Naive thymus-derived CD4-positive, alpha-beta T cell (primary cell): ENCODE measurements at regions of chr16 and their contacts with region 1.

Region 1: GRCh38 chr16:84754353-84754856 is 54.6 kb downstream of the USP10 start:
- DNase-seq: peak in 8 of 9 donors; percentile 50 to 87 (median 83)
- ATAC-seq: peak; percentile 78
- H3K4me3 ChIP-seq: peak overlapping the region; percentile 4
- H3K4me3 Mint-ChIP-seq: peak overlapping the region; percentile 49 to 79 (median 69)
- H3K27ac ChIP-seq: peak overlapping the region; percentile 44
- H3K27ac Mint-ChIP-seq: peak overlapping the region; percentile 69 to 92 (median 84)
- H3K4me1 ChIP-seq: peaks cover 19 to 38% of the 10 kb centered on the region in 2 donors
- H3K4me1 Mint-ChIP-seq: peaks cover 46 to 83% (median 79%) of the 10 kb centered on the region in 7 donors
- H3K27me3 ChIP-seq: no peaks in the 10 kb centered on the region
- H3K27me3 Mint-ChIP-seq: no peaks in the 10 kb centered on the region

Region 2: DNA sequence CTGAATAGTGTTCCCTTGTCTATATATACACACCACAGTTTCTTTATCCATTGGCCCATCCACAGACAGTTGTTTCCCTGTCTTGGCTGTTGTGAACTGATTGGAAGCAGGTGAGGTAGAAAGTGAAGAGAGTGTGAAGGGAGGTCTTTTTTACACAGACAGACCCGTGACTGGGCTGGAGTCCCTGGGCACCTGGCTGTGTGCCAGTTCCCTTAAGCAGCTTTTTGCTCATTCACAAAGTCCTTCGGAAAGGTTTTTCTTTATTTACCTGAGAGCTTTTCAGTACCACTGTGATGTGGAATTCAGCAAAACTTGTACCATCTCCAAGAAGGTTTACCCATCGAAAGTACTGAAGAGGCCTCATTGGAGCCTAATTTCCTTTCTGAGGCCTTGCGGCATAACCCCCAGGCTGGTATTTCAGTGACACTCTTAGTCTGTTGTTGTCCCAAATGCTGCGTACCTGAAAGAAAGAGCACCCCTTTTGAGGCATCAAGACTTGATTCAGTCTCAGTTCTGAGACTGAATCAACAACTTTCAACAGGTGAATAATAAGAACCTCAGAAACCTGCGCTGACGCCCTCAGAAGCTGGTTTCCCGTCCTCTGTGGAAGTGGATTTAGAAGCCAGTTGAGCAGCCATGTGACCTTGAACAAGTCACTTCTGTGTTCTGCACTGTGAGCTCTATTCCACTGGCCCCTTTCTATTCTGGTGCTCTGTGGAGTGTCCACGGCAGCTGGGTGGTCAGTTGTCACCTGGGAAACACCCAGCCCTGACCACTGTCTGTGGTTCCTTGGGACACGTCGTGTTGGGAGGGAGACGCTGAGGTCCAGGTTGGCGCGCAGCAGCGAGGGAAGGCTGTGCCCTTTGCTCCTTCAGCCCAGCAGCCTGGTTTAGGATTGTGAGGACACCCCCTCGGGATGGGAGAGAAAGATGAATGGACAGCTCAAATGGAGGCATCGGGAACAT is 11.5 kb after region 1 on chr16:
- CTCF ChIA-PET with region 1: interaction called, 35 read pairs
- POLR2A ChIA-PET with region 1: interaction called, 7 read pairs
- intact Hi-C with region 1: loop called in 1 of 2 experiments (anchors 1 kb)
- DNase-seq: peak in 7 of 9 donors; percentile 15 to 66 (median 42)
- ATAC-seq: peak; percentile 70
- H3K4me3 ChIP-seq: no peak overlapping the region
- H3K4me3 Mint-ChIP-seq: peak overlapping the region; percentile 46 to 88 (median 70)
- H3K27ac ChIP-seq: peak overlapping the region; percentile 69
- H3K27ac Mint-ChIP-seq: peak overlapping the region; percentile 65 to 98 (median 93)
- H3K4me1 ChIP-seq: peaks cover 0 to 41% of the 10 kb centered on the region in 2 donors
- H3K4me1 Mint-ChIP-seq: peaks cover 20 to 69% (median 55%) of the 10 kb centered on the region in 7 donors
- H3K27me3 ChIP-seq: no peaks in the 10 kb centered on the region
- H3K27me3 Mint-ChIP-seq: no peaks in the 10 kb centered on the region

Region 3: DNA sequence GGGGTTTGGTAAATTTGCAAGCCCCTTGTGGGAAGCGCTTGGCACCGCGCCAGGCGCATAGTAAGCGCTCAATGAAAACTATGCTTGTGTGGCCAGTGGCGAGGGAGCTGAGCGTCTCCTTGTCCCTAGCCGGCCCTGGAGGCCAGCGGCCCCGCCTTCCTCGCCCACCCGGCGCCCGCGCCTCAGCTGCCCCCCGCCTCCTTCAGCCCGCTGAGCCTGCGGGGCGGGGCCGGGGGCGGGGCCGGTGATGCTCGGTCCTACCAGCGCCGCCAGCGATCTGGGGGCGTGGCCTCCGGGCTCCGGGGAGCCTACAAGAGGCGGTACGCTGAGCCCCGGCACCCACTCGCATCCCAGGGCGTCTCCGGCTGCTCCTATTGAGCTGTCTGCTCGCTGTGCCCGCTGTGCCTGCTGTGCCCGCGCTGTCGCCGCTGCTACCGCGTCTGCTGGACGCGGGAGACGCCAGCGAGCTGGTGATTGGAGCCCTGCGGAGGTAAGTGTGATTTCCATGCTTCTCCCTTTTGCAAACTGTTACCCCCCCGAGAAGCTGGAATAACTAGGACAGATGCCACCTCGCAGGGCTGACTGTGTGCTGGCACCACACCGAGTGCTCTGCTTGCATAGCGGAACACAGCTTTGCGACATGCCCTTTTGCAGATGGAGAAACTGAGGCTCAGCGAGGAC is 65.4 kb after region 1 on chr16 and contains the start of gene CRISPLD2:
- CTCF ChIA-PET with region 1: no interaction called
- POLR2A ChIA-PET with region 1: no interaction called
- intact Hi-C with region 1: loop called (anchors 2 kb)
- DNase-seq: peak; percentile 85 to 92 (median 90)
- ATAC-seq: peak; percentile 100
- H3K4me3 ChIP-seq: peak within 1 kb of the TSS; percentile 55
- H3K4me3 Mint-ChIP-seq: peak within 1 kb of the TSS; percentile 75 to 87 (median 82)
- H3K27ac ChIP-seq: no peak within 1 kb of the TSS
- H3K27ac Mint-ChIP-seq: peak within 1 kb of the TSS in 4 of 9 donors; percentile 14 to 62 (median 34)
- H3K4me1 ChIP-seq: peaks cover 9 to 20% of the 10 kb centered on the region in 2 donors
- H3K4me1 Mint-ChIP-seq: peaks cover 11 to 31% (median 19%) of the 10 kb centered on the region in 7 donors
- H3K27me3 ChIP-seq: peaks cover 3 to 5% of the 10 kb centered on the region in 2 donors
- H3K27me3 Mint-ChIP-seq: peaks cover 0 to 54% (median 18%) of the 10 kb centered on the region in 5 donors
- total RNA-seq, gene CRISPLD2: 0.38 to 14.4 (median 0.49) TPM

Region 4: DNA sequence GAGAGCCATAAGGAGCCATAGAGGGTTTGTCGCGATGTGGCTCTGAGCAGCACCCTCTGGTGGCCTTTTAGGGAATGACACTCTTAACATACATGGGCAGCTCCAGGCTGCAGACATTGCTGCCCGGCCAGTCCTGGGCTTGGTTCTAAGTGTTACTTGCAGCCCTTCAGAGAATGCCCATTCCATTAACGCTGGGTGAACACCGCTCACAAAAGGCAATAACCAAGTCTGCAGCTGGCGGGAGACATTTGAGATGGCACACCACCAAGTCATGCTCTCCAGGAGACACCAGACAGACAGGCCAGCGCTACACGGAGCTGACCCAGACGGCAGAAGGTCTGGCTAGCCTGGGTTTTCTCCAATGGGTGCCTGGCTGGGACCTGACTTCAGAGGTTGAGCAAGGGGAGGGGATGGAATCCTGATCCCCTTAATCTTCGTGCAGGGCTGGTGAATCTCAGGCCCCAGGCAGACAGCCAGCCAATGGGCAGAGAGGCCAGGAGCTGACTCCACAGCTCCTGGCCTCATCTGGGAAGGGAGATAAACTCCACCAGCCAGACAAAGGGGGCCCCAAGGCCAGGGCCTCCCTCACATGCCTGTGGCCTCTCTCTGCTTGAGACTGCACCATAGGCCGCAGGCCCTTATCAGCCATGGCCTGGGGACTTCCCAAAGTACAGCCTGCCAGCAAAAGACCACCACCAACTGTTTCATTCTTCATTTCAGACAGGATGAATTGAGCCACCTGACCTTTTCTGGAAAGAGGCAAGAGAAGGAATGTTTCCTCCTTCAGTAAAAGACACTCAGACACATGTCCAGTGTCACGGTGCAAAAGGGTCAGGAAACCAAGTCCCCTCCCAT is 198.2 kb after region 1 on chr16:
- CTCF ChIA-PET with region 1: interaction called, 138 read pairs
- POLR2A ChIA-PET with region 1: interaction called, 5 read pairs
- intact Hi-C with region 1: loop called (anchors 1 kb)
- DNase-seq: peak; percentile 28 to 80 (median 68)
- ATAC-seq: peak; percentile 94
- H3K4me3 ChIP-seq: no peak overlapping the region
- H3K4me3 Mint-ChIP-seq: no peak overlapping the region
- H3K27ac ChIP-seq: no peak overlapping the region
- H3K27ac Mint-ChIP-seq: peak overlapping the region in 1 of 9 donors; percentile 9
- H3K4me1 ChIP-seq: peaks cover 0 to 3% of the 10 kb centered on the region in 2 donors
- H3K4me1 Mint-ChIP-seq: peaks cover 0 to 12% (median 4%) of the 10 kb centered on the region in 7 donors
- H3K27me3 ChIP-seq: no peaks in the 10 kb centered on the region
- H3K27me3 Mint-ChIP-seq: peaks cover 0 to 4% (median 0%) of the 10 kb centered on the region in 5 donors

Region 5: GRCh38 chr16:85086347-85087291 is 332.2 kb after region 1 on chr16:
- CTCF ChIA-PET with region 1: interaction called, 7 read pairs
- POLR2A ChIA-PET with region 1: no interaction called
- intact Hi-C with region 1: loop called in 1 of 2 experiments (anchors 1 kb)
- DNase-seq: peak; percentile 44 to 78 (median 74)
- ATAC-seq: peak; percentile 88
- H3K4me3 ChIP-seq: no peak overlapping the region
- H3K4me3 Mint-ChIP-seq: no peak overlapping the region
- H3K27ac ChIP-seq: no peak overlapping the region
- H3K27ac Mint-ChIP-seq: peak overlapping the region in 3 of 9 donors; percentile 23 to 59 (median 43)
- H3K4me1 ChIP-seq: no peaks in the 10 kb centered on the region
- H3K4me1 Mint-ChIP-seq: peaks cover 6 to 31% (median 15%) of the 10 kb centered on the region in 7 donors
- H3K27me3 ChIP-seq: no peaks in the 10 kb centered on the region
- H3K27me3 Mint-ChIP-seq: peaks cover 0 to 2% (median 0%) of the 10 kb centered on the region in 5 donors